Naive thymus-derived CD4-positive, alpha-beta T cell (primary cell): ENCODE measurements at regions of chr9 and their contacts with region 1.

Region 1: DNA sequence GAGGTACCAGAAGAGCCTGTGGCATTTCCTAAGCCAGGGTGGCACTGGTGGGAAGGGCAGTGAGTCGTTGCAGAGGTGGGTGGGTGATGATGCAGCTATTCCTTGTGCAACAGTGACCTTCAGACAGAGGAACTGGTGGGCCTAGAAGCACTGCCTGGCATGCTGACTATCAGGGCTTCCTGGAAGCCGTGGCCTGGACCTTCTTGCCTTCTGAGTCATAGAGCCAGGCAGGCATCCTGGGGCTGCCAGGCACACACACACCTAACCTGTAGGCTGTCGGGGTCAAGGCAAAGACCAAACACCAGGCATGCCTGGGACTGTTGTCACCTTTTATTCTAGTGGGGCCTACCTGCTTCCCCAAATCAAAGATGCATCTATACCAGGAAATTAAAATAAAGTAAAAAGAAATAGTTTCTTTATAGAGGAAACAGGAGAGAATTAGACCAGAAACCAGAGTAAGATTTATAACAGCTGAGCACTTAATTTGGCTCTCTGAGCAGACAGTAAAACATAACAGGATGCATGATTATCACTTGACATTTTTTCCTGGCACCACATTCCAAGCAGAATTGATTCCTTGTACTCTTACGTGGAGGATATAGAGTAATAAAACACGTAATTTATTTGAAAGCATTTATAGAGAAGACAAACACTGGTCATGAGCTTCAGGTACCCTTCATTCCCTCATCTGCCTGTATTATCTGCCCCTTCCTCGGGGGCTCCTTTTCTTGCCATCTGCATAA is 25.1 kb downstream of the NANS start:
- DNase-seq: peak in 1 of 9 donors; percentile 28
- ATAC-seq: no peak
- H3K4me3 ChIP-seq: no peak overlapping the region
- H3K4me3 Mint-ChIP-seq: no peak overlapping the region
- H3K27ac ChIP-seq: peak overlapping the region; percentile 49
- H3K27ac Mint-ChIP-seq: peak overlapping the region; percentile 8 to 91 (median 72)
- H3K4me1 ChIP-seq: peaks cover 1 to 23% of the 10 kb centered on the region in 2 donors
- H3K4me1 Mint-ChIP-seq: peaks cover 9 to 64% (median 48%) of the 10 kb centered on the region in 7 donors
- H3K27me3 ChIP-seq: no peaks in the 10 kb centered on the region
- H3K27me3 Mint-ChIP-seq: no peaks in the 10 kb centered on the region

Region 2: DNA sequence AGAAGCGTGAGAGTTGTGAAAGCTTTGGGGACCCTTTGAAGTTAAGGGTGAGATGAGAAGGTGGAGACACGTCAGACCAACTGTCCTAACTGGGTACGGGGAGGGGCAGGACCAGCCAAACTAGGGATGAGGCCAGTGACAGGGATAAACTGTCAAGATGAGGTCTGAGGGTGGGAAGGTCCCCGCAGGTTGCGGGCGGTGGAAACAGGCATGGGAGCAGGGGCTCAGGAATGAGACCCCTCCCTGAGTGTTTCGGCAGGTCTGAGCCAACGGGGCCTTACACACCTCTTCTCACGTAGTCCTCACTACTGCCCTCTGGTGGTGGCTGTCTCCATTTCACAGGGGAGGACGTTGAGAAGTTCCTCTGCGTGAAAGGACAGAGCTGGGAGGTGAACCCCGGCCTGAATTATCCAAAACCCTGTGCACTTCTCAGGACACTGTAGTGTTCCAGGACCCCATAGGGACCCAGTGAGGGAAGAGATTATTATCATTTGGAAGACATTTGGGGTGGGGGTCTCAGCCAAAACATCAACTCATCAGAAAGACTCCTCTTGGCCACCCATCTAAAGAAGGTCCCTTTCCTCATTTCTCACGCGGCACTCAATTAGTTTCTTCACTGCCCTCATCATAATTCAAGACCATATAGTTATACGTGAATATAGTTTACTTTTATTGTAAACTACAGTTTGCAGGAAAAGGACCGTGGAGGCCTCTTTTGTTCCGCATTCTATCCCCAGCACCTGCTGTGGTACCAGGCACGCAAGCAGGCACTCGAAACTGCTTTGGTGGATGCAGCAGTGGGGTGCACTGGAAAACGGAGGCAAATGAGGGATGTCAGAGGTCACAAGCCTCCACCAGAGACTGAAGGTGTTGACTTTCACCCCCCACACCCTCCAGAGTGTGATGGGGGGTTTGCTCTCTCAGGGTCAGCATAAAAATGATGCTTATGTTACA is 46.8 kb before region 1 on chr9:
- CTCF ChIA-PET with region 1: no interaction called
- POLR2A ChIA-PET with region 1: no interaction called
- intact Hi-C with region 1: no loop called
- DNase-seq: peak; percentile 76 to 92 (median 86)
- ATAC-seq: peak; percentile 99
- H3K4me3 ChIP-seq: no peak overlapping the region
- H3K4me3 Mint-ChIP-seq: peak overlapping the region in 8 of 10 donors; percentile 11 to 63 (median 41)
- H3K27ac ChIP-seq: no peak overlapping the region
- H3K27ac Mint-ChIP-seq: peak overlapping the region in 8 of 9 donors; percentile 9 to 87 (median 66)
- H3K4me1 ChIP-seq: peaks cover 0 to 4% of the 10 kb centered on the region in 2 donors
- H3K4me1 Mint-ChIP-seq: peaks cover 5 to 12% (median 8%) of the 10 kb centered on the region in 7 donors
- H3K27me3 ChIP-seq: no peaks in the 10 kb centered on the region
- H3K27me3 Mint-ChIP-seq: peaks cover 0 to 8% (median 0%) of the 10 kb centered on the region in 5 donors

Region 3: DNA sequence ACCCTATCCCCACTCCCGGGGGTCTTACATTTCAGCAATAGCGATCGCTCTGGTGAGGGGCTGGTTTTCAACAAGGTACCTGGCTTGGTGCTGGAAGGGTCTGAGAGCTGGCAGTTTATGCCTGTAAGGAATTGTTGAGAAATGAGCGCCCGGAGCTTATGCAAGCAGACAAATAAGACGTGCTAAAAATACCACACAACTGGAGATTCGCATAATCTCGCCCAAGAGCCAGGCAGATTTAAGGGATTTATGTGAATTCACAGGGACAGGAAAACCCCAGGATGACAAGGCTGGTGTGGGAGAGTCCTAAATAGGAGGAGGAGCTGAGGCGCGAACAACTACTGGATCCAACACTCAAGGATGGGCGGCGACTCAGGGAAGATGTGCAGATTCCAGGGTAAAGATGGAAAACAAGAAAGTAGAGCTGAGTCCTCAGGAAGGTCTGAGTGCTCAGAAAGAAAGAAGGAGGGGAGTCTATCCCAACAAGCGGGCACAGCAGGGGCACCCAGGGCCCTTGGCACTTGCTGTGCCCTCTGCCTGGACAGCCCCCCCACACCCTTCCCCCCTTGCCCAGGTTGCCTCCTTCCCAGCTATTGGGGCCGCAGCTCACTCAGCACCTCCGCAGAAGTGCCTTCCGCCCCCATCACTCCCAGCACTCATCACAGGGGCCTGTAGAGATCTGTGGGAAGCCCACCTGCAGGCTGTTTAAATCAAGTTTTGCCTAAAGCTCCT is 10.4 kb after region 1 on chr9:
- CTCF ChIA-PET with region 1: interaction called, 3 read pairs
- POLR2A ChIA-PET with region 1: interaction called, 16 read pairs
- intact Hi-C with region 1: no loop called
- DNase-seq: no peak
- ATAC-seq: no peak
- H3K4me3 ChIP-seq: no peak overlapping the region
- H3K4me3 Mint-ChIP-seq: peak overlapping the region in 8 of 10 donors; percentile 32 to 78 (median 60)
- H3K27ac ChIP-seq: no peak overlapping the region
- H3K27ac Mint-ChIP-seq: peak overlapping the region; percentile 79 to 95 (median 84)
- H3K4me1 ChIP-seq: peaks cover 0 to 21% of the 10 kb centered on the region in 2 donors
- H3K4me1 Mint-ChIP-seq: peaks cover 22 to 72% (median 69%) of the 10 kb centered on the region in 7 donors
- H3K27me3 ChIP-seq: no peaks in the 10 kb centered on the region
- H3K27me3 Mint-ChIP-seq: no peaks in the 10 kb centered on the region

Region 4: DNA sequence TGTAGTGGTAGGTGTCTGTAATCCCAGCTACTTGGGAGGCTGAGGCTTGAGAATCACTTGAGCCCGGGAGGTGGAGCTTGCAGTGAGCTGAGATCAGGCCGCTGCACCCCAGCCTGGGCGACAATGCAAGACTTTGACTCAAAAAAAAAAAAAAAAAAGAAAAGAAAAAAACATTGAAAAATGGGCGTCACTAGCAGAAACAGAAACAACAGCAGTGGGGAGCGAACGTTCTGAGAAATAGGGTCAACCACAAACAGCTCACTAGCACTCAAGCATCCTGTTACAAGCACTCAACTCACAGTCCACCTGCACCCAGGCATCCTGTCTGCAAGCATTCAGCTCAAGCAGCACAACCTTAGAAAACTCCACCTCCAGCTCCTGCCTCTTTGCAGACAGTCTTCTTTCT is 20.2 kb after region 1 on chr9:
- CTCF ChIA-PET with region 1: interaction called, 5 read pairs
- POLR2A ChIA-PET with region 1: interaction called, 19 read pairs
- intact Hi-C with region 1: no loop called
- DNase-seq: peak; percentile 35 to 96 (median 92)
- ATAC-seq: peak; percentile 99
- H3K4me3 ChIP-seq: peak overlapping the region; percentile 31
- H3K4me3 Mint-ChIP-seq: peak overlapping the region; percentile 66 to 86 (median 77)
- H3K27ac ChIP-seq: peak overlapping the region; percentile 78
- H3K27ac Mint-ChIP-seq: peak overlapping the region; percentile 87 to 99 (median 95)
- H3K4me1 ChIP-seq: peaks cover 88 to 91% of the 10 kb centered on the region in 2 donors
- H3K4me1 Mint-ChIP-seq: peaks cover 52 to 97% (median 88%) of the 10 kb centered on the region in 7 donors
- H3K27me3 ChIP-seq: no peaks in the 10 kb centered on the region
- H3K27me3 Mint-ChIP-seq: no peaks in the 10 kb centered on the region

Region 5: GRCh38 chr9:100033877-100034551 is 1952.4 kb after region 1 on chr9:
- CTCF ChIA-PET with region 1: no interaction called
- POLR2A ChIA-PET with region 1: no interaction called
- intact Hi-C with region 1: no loop called
- DNase-seq: no peak
- ATAC-seq: no peak
- H3K4me3 ChIP-seq: no peak overlapping the region
- H3K4me3 Mint-ChIP-seq: peak overlapping the region in 2 of 10 donors; percentile 13 to 16
- H3K27ac ChIP-seq: no peak overlapping the region
- H3K27ac Mint-ChIP-seq: peak overlapping the region in 2 of 9 donors; percentile 26 to 42
- H3K4me1 ChIP-seq: no peaks in the 10 kb centered on the region
- H3K4me1 Mint-ChIP-seq: peaks cover 21 to 53% (median 40%) of the 10 kb centered on the region in 7 donors
- H3K27me3 ChIP-seq: no peaks in the 10 kb centered on the region
- H3K27me3 Mint-ChIP-seq: no peaks in the 10 kb centered on the region